Activated CD8-positive, alpha-beta T cell treated with anti-CD3 and anti-CD28 coated beads, Interleukin-2, amount 10 ng/mL, durations not matched to agents 7 days and 5 days (primary cell): ENCODE measurements at regions of chr7 and their contacts with region 1.

Region 1: DNA sequence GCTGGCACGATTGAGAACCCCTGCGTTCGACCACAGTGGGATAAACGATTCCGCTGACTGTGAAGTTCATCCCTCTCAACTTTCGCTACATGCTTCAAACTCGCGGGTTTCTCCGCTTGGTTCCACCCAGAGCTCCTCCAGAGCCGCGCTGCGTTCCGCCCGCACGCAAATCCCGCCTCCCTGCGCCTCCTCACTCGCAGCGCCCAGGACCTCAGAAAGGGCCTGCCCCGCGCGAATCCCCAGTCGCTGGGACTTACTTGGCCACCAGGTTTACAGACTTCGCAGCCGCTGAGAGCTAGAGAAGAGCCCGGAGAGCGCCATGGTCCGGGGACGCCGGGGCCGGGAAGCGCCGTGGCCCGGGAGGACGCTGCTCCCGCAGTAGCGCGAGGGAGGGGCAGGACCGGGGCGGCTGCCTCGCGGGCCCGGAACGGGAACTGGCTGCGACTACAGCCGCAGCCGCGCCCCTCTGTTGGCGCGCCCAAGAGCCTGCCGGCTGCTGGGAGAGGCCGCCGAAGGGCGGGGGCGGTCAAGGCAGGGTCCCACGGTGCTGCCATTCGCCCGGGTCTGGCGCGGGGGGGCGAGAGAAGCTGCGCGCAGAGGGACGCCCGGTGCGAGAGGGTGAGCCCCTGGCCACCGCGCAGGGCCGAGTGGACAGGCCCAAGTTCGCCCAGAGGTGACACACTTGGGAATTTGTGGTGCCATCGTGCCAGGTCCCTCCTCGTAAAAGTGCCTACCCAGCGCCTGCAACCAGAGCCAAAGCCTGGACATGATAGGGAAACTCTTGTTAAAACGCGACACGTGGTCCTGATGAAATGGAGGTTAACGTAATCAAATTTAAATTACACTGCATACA is at the start of gene NOD1:
- DNase-seq: peak; percentile 76
- ATAC-seq: peak; percentile 96
- H3K4me3 Mint-ChIP-seq: peak within 1 kb of the TSS; percentile 91
- H3K27ac Mint-ChIP-seq: peak within 1 kb of the TSS; percentile 87
- H3K4me1 Mint-ChIP-seq: peaks cover 58% of the 10 kb centered on the region
- H3K27me3 Mint-ChIP-seq: no peaks in the 10 kb centered on the region
- total RNA-seq, gene NOD1: 22.3 to 25.2 TPM

Region 2: GRCh38 chr7:30504347-30505173 is 26.0 kb after region 1 on chr7 and contains the start of gene GGCT:
- CTCF ChIA-PET with region 1: interaction called, 3 read pairs
- POLR2A ChIA-PET with region 1: interaction called, 11 read pairs
- DNase-seq: peak; percentile 99
- ATAC-seq: peak; percentile 98
- H3K4me3 Mint-ChIP-seq: peak within 1 kb of the TSS; percentile 80
- H3K27ac Mint-ChIP-seq: peak within 1 kb of the TSS; percentile 86
- H3K4me1 Mint-ChIP-seq: peaks cover 47% of the 10 kb centered on the region
- H3K27me3 Mint-ChIP-seq: no peaks in the 10 kb centered on the region
- total RNA-seq, gene GGCT: 49.7 to 50.2 TPM